ENCODE measurements at regions of chrX and their contacts with region 1.

Region 1: GRCh38 chrX:109760241-109760922 is 27.3 kb upstream of the ACSL4 start:
- DNase-seq: no peak
- ATAC-seq: peak; percentile 34
- H3K4me3 Mint-ChIP-seq: no peak overlapping the region
- H3K27ac Mint-ChIP-seq: no peak overlapping the region
- H3K4me1 Mint-ChIP-seq: peaks cover 22% of the 10 kb centered on the region
- H3K27me3 Mint-ChIP-seq: no peaks in the 10 kb centered on the region
- CTCF ChIP-seq: no peak

Region 2: GRCh38 chrX:109830704-109831206 is 70.4 kb after region 1 on chrX:
- CTCF ChIA-PET with region 1: interaction called, 10 read pairs
- POLR2A ChIA-PET with region 1: no interaction called
- DNase-seq: no peak
- ATAC-seq: no peak
- H3K4me3 Mint-ChIP-seq: no peak overlapping the region
- H3K27ac Mint-ChIP-seq: no peak overlapping the region
- H3K4me1 Mint-ChIP-seq: peaks cover 8% of the 10 kb centered on the region
- H3K27me3 Mint-ChIP-seq: no peaks in the 10 kb centered on the region
- CTCF ChIP-seq: no peak